K562 (cell line): ENCODE measurements at regions of chr3 and their contacts with region 1.

Region 1: DNA sequence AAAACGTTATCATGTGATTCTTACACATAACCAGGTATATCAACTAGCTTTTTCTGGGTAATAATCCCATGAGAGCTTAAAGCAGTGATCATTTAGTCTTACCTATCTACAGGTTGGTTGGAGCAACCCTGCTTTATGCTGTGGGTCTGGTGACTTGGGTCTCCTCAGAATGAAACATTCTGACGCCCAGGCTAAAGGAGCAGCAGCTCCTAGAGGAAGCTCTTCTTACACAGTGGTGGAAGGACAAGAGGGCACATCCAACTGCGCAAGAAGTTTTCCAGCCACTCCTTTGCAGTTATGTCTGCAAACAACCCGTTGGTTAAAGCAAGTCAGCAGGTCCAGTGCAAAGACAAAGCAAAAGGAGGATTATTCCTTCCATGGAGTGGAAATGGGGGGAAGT is 377.5 kb downstream of the EDEM1 start:
- DNase-seq: peak; percentile 24 to 55 (median 38)
- ATAC-seq: peak; percentile 69
- H3K4me3 ChIP-seq: no peak overlapping the region
- H3K27ac ChIP-seq: peak overlapping the region; percentile 5; the same call in 1 of the 3 replicates
- H3K4me1 ChIP-seq: peaks cover 0 to 33% of the 10 kb centered on the region in 2 experiments; a peak in 3 of 5 replicates
- H3K27me3 ChIP-seq: no peaks in the 10 kb centered on the region; a peak in 1 of 5 replicates
- CTCF ChIP-seq: no peak
- EP300 ChIP-seq: no peak
- POLR2A ChIP-seq: no peak
- RAD21 ChIP-seq: no peak

Region 2: DNA sequence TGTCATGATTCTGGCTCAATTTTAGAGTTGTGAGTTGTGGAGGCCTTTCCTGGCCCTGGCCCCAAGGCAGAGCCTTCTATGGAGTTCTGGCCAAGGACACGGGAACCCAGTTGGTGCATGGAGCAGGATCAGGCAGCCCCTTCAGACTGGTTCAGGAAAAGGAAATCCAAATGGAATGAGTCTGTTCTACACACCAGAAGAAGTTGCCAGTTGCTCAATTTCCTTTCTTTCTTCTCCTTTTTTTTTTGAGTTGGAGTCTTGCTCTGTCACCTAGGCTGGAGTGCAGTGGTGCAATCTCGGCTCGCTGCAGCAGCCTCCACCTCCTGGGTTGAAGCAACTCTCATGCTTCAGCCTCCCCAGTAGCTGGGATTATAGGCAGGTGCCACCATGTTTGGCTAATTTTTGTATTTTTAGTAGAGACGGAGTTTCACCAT is 614.7 kb before region 1 on chr3:
- CTCF ChIA-PET with region 1: no interaction called
- POLR2A ChIA-PET with region 1: no interaction called
- in situ Hi-C with region 1: no loop called
- intact Hi-C with region 1: no loop called
- DNase-seq: no peak
- ATAC-seq: no peak
- H3K4me3 ChIP-seq: no peak overlapping the region
- H3K27ac ChIP-seq: no peak overlapping the region
- H3K4me1 ChIP-seq: no peaks in the 10 kb centered on the region
- H3K27me3 ChIP-seq: no peaks in the 10 kb centered on the region
- CTCF ChIP-seq: no peak
- EP300 ChIP-seq: no peak
- POLR2A ChIP-seq: no peak
- RAD21 ChIP-seq: no peak

Region 3: DNA sequence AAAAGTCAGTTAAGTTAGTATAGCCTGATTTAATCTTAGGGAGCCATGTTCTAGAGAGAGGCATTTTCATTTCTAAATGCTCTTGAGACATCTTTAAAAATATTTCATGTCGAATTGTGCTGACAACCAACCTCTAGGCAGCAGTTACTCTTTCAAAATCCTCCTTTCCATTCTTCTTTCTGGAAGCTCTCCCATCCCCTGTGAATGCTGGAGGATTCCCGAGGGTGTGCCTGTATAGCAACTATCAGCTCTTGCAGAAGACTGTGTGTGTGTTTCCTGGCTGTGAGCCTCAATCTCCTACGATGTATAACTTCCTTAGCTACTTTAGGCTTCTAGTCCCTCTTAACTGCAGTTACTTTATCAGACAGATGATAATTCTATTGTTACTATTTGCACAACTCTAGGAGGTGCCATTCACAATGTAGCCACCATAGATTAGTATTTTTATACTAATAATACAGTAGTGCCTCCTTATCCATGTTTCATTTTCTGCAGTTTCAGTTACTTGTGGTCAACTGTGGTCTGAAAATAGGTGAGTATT is 127.2 kb before region 1 on chr3:
- CTCF ChIA-PET with region 1: no interaction called
- POLR2A ChIA-PET with region 1: no interaction called
- in situ Hi-C with region 1: no loop called
- intact Hi-C with region 1: no loop called
- DNase-seq: peak; percentile 40 to 75 (median 52)
- ATAC-seq: peak; percentile 76
- H3K4me3 ChIP-seq: no peak overlapping the region
- H3K27ac ChIP-seq: peak overlapping the region; percentile 75
- H3K4me1 ChIP-seq: peaks cover 0 to 41% of the 10 kb centered on the region in 2 experiments
- H3K27me3 ChIP-seq: no peaks in the 10 kb centered on the region
- CTCF ChIP-seq: no peak
- EP300 ChIP-seq: no peak; the same call in 1 of the 2 replicates
- POLR2A ChIP-seq: no peak
- RAD21 ChIP-seq: no peak; a peak in 1 of 4 replicates

Region 4: GRCh38 chr3:5523125-5523524 is 41.9 kb before region 1 on chr3:
- CTCF ChIA-PET with region 1: no interaction called
- POLR2A ChIA-PET with region 1: no interaction called
- in situ Hi-C with region 1: no loop called
- intact Hi-C with region 1: no loop called
- DNase-seq: no peak
- ATAC-seq: no peak
- H3K4me3 ChIP-seq: no peak overlapping the region
- H3K27ac ChIP-seq: no peak overlapping the region
- H3K4me1 ChIP-seq: no peaks in the 10 kb centered on the region; a peak in 2 of 5 replicates
- H3K27me3 ChIP-seq: no peaks in the 10 kb centered on the region
- CTCF ChIP-seq: no peak
- EP300 ChIP-seq: no peak
- POLR2A ChIP-seq: no peak
- RAD21 ChIP-seq: no peak

Region 5: GRCh38 chr3:5554245-5554747 is 10.7 kb before region 1 on chr3:
- CTCF ChIA-PET with region 1: no interaction called
- POLR2A ChIA-PET with region 1: interaction called, 25 read pairs
- in situ Hi-C with region 1: no loop called
- intact Hi-C with region 1: no loop called
- DNase-seq: peak in 1 of 4 experiments; percentile 16
- ATAC-seq: no peak
- H3K4me3 ChIP-seq: no peak overlapping the region
- H3K27ac ChIP-seq: no peak overlapping the region
- H3K4me1 ChIP-seq: peaks cover 0 to 6% of the 10 kb centered on the region in 2 experiments; a peak in 2 of 5 replicates
- H3K27me3 ChIP-seq: no peaks in the 10 kb centered on the region
- CTCF ChIP-seq: no peak
- EP300 ChIP-seq: peak; percentile 82
- POLR2A ChIP-seq: no peak
- RAD21 ChIP-seq: no peak